ENCODE measurements at regions of chr12 and their contacts with region 1.

Region 1: DNA sequence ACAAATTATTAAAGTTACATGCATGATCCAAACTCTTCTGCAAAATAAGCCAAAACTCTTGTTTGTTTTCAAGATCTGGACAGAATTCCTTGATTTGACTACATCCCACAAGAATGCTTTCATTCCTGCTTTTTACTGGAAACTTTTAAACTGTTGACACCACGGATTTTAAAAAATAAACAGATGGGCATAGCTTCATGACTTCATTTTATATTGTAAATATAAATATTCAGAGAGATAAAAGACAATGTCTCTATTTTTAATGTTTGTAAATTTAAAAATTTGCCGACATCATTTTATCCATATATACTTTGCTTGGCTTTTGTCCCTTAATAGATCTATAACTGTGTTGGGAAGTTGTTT is 134.3 kb upstream of the DCN start:
- DNase-seq: no peak
- H3K4me3 ChIP-seq: no peak overlapping the region
- H3K27ac ChIP-seq: no peak overlapping the region
- H3K4me1 ChIP-seq: no peaks in the 10 kb centered on the region
- H3K27me3 ChIP-seq: no peaks in the 10 kb centered on the region
- CTCF ChIP-seq: no peak
- POLR2A ChIP-seq: no peak

Region 2: GRCh38 chr12:90999966-91000365 is 316.9 kb before region 1 on chr12:
- CTCF ChIA-PET with region 1: no interaction called
- POLR2A ChIA-PET with region 1: no interaction called
- dilution Hi-C with region 1: no loop called
- intact Hi-C with region 1: loop called (anchors 5 kb)
- DNase-seq: no peak
- H3K4me3 ChIP-seq: no peak overlapping the region
- H3K27ac ChIP-seq: no peak overlapping the region
- H3K4me1 ChIP-seq: no peaks in the 10 kb centered on the region
- H3K27me3 ChIP-seq: no peaks in the 10 kb centered on the region
- CTCF ChIP-seq: no peak
- POLR2A ChIP-seq: no peak

Region 3: GRCh38 chr12:91513313-91513712 is 196.4 kb after region 1 on chr12:
- CTCF ChIA-PET with region 1: no interaction called
- POLR2A ChIA-PET with region 1: no interaction called
- dilution Hi-C with region 1: no loop called
- intact Hi-C with region 1: no loop called
- DNase-seq: no peak
- H3K4me3 ChIP-seq: no peak overlapping the region
- H3K27ac ChIP-seq: no peak overlapping the region
- H3K4me1 ChIP-seq: no peaks in the 10 kb centered on the region
- H3K27me3 ChIP-seq: peaks cover 0 to 2% of the 10 kb centered on the region in 2 experiments
- CTCF ChIP-seq: no peak
- POLR2A ChIP-seq: no peak